HEK293 (cell line): ENCODE measurements at regions of chr1 and their contacts with region 1.

Region 1: GRCh38 chr1:159214149-159214760 is 9.6 kb downstream of the ACKR1 start:
- H3K4me3 ChIP-seq: no peak overlapping the region
- H3K27ac ChIP-seq: no peak overlapping the region
- H3K4me1 ChIP-seq: no peaks in the 10 kb centered on the region
- CTCF ChIP-seq: no peak

Region 2: DNA sequence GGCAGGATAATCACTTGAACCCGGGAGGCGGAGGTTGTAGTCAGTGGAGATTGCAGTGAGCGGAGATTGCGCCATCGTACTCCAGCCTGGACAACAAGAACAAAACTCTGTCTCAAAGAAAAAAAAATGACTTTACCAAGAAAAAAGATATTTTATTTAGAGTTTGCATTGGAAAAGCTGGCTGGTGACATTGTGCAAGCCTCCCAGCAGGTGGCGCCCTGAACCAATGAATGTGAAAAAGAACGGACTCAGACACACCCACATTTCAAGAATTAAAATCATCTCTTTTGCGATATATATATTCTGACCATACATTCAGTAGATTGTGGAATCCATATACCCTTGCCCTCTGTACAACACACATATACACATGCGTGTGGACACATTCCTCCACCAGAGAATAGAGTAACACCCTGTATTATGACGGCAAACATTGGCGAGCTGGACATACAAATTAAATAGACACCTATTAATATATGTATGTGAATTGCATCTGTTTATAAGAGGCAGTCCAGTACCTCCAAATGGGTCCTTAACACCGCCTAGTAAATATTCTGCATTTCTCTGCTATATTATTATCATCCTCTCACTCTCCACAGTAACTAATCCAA is 81.9 kb before region 1 on chr1:
- CTCF ChIA-PET with region 1: interaction called, 143 read pairs
- POLR2A ChIA-PET with region 1: no interaction called
- H3K4me3 ChIP-seq: no peak overlapping the region
- H3K27ac ChIP-seq: no peak overlapping the region
- H3K4me1 ChIP-seq: no peaks in the 10 kb centered on the region
- CTCF ChIP-seq: no peak

Region 3: DNA sequence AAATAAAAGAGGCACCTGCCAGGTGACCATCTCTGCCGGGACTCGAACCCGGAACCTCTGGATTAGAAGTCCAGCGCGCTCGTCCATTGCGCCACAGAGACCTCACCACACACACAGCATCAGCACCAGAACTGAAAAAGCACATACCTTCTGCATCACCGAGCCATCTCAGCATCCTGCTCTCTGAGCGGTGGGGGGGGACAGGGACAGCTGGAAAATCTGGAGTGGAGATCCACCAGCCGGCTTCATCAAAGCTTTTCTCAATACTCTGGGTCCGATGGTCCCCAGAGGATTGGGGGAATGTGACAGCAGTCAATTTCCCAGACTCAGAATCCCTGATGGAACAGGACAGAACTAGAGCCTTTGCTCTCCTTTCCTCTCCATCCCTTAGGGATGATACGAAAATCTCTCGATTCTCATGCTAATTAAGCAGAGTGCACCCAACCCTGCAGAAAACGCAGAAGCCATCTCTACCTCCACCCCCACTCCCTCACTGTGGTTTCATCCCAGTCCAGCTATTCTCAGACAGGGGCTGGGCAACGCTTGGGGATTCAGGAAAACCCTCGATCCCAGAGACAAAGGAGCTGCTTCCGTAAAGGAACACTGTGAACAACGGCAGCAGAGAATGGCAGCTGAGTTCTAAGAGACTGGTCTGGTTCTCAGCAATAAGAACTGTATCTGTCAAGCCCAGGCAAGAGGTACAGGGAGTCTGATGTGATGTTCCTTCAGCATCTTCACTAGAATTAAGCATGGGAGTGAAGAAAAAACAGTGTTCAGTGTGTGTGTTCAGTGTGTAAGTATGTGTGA is 72.5 kb before region 1 on chr1:
- CTCF ChIA-PET with region 1: interaction called, 12 read pairs
- POLR2A ChIA-PET with region 1: no interaction called
- H3K4me3 ChIP-seq: peak overlapping the region; percentile 48
- H3K27ac ChIP-seq: no peak overlapping the region
- H3K4me1 ChIP-seq: no peaks in the 10 kb centered on the region
- CTCF ChIP-seq: no peak

Region 4: GRCh38 chr1:159161001-159161718 is 53.1 kb before region 1 on chr1:
- CTCF ChIA-PET with region 1: interaction called, 105 read pairs
- POLR2A ChIA-PET with region 1: no interaction called
- H3K4me3 ChIP-seq: no peak overlapping the region
- H3K27ac ChIP-seq: no peak overlapping the region
- H3K4me1 ChIP-seq: no peaks in the 10 kb centered on the region
- CTCF ChIP-seq: peak; percentile 97

Region 5: GRCh38 chr1:159197561-159198557 is 16.4 kb before region 1 on chr1:
- CTCF ChIA-PET with region 1: interaction called, 66 read pairs
- POLR2A ChIA-PET with region 1: no interaction called
- H3K4me3 ChIP-seq: no peak overlapping the region
- H3K27ac ChIP-seq: no peak overlapping the region
- H3K4me1 ChIP-seq: no peaks in the 10 kb centered on the region
- CTCF ChIP-seq: peak; percentile 43; the same call in 1 of the 2 replicates

Region 6: DNA sequence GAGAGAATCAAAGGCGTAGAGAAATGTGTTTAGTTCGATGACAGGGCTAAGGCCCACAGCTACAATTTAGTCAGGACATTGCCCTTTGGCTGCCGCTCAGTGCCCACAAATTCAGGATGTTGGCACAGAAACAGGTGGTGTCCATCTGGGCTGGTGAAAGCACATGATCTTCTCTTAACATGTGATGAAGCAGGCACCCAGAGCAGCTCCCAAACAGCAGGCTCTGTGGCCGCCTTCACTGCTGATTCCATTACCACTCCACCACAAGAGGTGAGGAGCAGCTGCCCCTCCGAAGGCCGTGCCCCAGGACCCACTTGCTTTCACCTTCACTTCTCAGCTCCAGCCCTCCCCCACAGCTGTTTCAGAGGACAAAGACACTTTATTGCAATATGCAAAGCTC is 15.2 kb after region 1 on chr1:
- CTCF ChIA-PET with region 1: interaction called, 16 read pairs
- POLR2A ChIA-PET with region 1: no interaction called
- H3K4me3 ChIP-seq: no peak overlapping the region
- H3K27ac ChIP-seq: no peak overlapping the region
- H3K4me1 ChIP-seq: no peaks in the 10 kb centered on the region
- CTCF ChIP-seq: no peak